Mammary epithelial cell (primary cell): ENCODE measurements at regions of chr3 and their contacts with region 1.

Region 1: DNA sequence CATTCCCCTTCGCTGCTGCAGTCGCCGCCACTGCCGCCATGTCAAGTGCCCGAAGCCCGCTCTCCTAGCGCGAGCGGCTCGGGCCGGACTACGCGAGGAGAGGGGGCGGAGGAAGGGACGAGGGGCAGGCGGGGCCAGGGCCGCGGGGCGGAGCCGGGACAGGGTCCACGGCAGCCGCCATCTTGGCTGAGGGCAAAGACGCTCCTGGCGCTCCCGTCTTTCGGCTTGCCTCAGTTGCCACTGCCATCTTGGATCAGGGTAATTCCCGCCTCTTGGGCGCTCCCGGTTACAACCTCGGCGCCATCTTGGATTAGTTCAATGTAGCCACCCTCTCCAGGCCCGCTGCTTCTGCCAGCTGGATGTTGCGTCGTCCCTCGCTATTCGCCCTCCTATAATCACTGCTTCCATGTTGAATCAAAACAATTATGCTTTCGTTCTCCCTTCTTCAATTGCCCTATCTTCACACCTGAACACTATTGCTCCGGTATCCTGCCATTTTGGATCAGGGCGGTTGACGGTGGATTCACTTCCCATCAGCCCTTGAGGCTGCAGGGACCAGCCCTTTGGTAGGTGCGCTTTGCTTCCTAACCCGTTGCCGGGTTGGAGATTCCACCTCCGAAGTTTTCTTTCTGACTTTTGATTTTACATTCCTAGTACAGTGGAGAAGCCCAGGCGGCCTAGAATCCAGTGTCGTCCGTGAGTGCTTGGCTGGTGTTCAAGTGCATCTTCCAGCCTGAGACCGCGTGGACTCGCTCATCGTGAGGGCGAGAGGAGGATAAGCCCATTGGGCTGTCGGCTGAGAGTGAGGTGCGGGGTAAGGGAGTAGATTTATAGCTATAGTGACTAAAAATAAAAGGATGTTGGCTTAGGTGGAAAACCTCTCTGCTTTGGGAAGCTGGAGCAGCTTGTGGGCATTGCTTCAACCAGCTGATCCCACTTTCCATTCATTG is at the start of gene HACD2:
- DNase-seq: peak; percentile 96
- H3K4me3 ChIP-seq: peak within 1 kb of the TSS; percentile 64 to 90 (median 68)
- H3K27ac ChIP-seq: peak within 1 kb of the TSS; percentile 92
- H3K4me1 ChIP-seq: peaks cover 27% of the 10 kb centered on the region
- H3K27me3 ChIP-seq: no peaks in the 10 kb centered on the region
- CTCF ChIP-seq: no peak
- total RNA-seq, gene HACD2: 98.5 to 199 TPM

Region 2: DNA sequence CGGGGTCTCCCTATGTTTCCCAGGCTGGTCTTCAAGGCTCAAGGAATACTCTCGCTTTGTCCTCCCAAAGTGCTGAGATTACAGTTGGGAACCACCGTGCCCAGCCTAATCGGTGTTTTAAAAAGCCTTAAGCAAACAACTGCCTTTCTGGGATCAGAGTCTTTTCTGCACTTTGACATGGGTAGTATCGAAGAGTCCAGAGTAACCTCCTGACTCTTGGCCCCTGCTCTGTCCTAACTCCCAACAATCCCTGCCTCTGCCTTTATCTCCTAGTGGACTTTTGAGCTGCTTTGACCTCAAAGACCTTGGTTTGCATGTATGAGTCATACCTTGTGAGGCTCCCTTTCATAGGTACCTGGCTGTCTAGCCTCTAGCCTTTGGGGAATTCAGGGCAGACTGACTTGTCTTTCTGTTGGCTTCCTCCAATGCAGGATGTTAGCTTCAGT is 20.5 kb after region 1 on chr3:
- CTCF ChIA-PET with region 1: no interaction called
- dilution Hi-C with region 1: no loop called
- in situ Hi-C with region 1: no loop called
- intact Hi-C with region 1: loop called (anchors 1 kb)
- DNase-seq: peak; percentile 91
- H3K4me3 ChIP-seq: no peak overlapping the region
- H3K27ac ChIP-seq: peak overlapping the region; percentile 78
- H3K4me1 ChIP-seq: peaks cover 54% of the 10 kb centered on the region
- H3K27me3 ChIP-seq: no peaks in the 10 kb centered on the region
- CTCF ChIP-seq: no peak

Region 3: GRCh38 chr3:123618768-123619484 is 33.7 kb after region 1 on chr3:
- CTCF ChIA-PET with region 1: interaction called, 4 read pairs
- dilution Hi-C with region 1: no loop called
- in situ Hi-C with region 1: no loop called
- intact Hi-C with region 1: loop called (anchors 1 kb)
- DNase-seq: peak; percentile 53
- H3K4me3 ChIP-seq: peak overlapping the region in 1 of 3 experiments; percentile 28
- H3K27ac ChIP-seq: no peak overlapping the region
- H3K4me1 ChIP-seq: peaks cover 59% of the 10 kb centered on the region
- H3K27me3 ChIP-seq: no peaks in the 10 kb centered on the region
- CTCF ChIP-seq: no peak

Region 4: GRCh38 chr3:123632161-123632655 is 46.9 kb after region 1 on chr3:
- CTCF ChIA-PET with region 1: no interaction called
- dilution Hi-C with region 1: no loop called
- in situ Hi-C with region 1: loop called in 1 of 2 experiments (anchors 5 kb)
- intact Hi-C with region 1: no loop called
- DNase-seq: no peak
- H3K4me3 ChIP-seq: no peak overlapping the region
- H3K27ac ChIP-seq: no peak overlapping the region
- H3K4me1 ChIP-seq: peaks cover 33% of the 10 kb centered on the region
- H3K27me3 ChIP-seq: no peaks in the 10 kb centered on the region
- CTCF ChIP-seq: no peak

Region 5: GRCh38 chr3:123642182-123642956 is 57.1 kb after region 1 on chr3:
- CTCF ChIA-PET with region 1: interaction called, 7 read pairs
- dilution Hi-C with region 1: no loop called
- in situ Hi-C with region 1: no loop called
- intact Hi-C with region 1: loop called (anchors 1 kb)
- DNase-seq: peak; percentile 77
- H3K4me3 ChIP-seq: no peak overlapping the region
- H3K27ac ChIP-seq: no peak overlapping the region
- H3K4me1 ChIP-seq: peaks cover 19% of the 10 kb centered on the region
- H3K27me3 ChIP-seq: no peaks in the 10 kb centered on the region
- CTCF ChIP-seq: peak; percentile 79 to 95

Region 6: GRCh38 chr3:123723522-123724168 is 138.4 kb after region 1 on chr3:
- CTCF ChIA-PET with region 1: no interaction called
- dilution Hi-C with region 1: no loop called
- in situ Hi-C with region 1: no loop called
- intact Hi-C with region 1: loop called (anchors 5 kb)
- DNase-seq: peak; percentile 66
- H3K4me3 ChIP-seq: no peak overlapping the region
- H3K27ac ChIP-seq: no peak overlapping the region
- H3K4me1 ChIP-seq: peaks cover 7% of the 10 kb centered on the region
- H3K27me3 ChIP-seq: no peaks in the 10 kb centered on the region
- CTCF ChIP-seq: peak; percentile 87 to 92

Region 7: GRCh38 chr3:125470671-125471070 is 1885.4 kb after region 1 on chr3:
- CTCF ChIA-PET with region 1: no interaction called
- dilution Hi-C with region 1: no loop called
- in situ Hi-C with region 1: no loop called
- intact Hi-C with region 1: no loop called
- DNase-seq: no peak
- H3K4me3 ChIP-seq: no peak overlapping the region
- H3K27ac ChIP-seq: no peak overlapping the region
- H3K4me1 ChIP-seq: no peaks in the 10 kb centered on the region
- H3K27me3 ChIP-seq: no peaks in the 10 kb centered on the region
- CTCF ChIP-seq: no peak